AG04450 (cell line): ENCODE measurements at regions of chr12 and their contacts with region 1.

Region 1: GRCh38 chr12:49580572-49581535 is 12.9 kb upstream of the MCRS1 start:
- DNase-seq: peak; percentile 42
- H3K4me3 ChIP-seq: no peak overlapping the region
- H3K27ac ChIP-seq: no peak overlapping the region
- H3K27me3 ChIP-seq: no peaks in the 10 kb centered on the region
- CTCF ChIP-seq: peak; percentile 93

Region 2: DNA sequence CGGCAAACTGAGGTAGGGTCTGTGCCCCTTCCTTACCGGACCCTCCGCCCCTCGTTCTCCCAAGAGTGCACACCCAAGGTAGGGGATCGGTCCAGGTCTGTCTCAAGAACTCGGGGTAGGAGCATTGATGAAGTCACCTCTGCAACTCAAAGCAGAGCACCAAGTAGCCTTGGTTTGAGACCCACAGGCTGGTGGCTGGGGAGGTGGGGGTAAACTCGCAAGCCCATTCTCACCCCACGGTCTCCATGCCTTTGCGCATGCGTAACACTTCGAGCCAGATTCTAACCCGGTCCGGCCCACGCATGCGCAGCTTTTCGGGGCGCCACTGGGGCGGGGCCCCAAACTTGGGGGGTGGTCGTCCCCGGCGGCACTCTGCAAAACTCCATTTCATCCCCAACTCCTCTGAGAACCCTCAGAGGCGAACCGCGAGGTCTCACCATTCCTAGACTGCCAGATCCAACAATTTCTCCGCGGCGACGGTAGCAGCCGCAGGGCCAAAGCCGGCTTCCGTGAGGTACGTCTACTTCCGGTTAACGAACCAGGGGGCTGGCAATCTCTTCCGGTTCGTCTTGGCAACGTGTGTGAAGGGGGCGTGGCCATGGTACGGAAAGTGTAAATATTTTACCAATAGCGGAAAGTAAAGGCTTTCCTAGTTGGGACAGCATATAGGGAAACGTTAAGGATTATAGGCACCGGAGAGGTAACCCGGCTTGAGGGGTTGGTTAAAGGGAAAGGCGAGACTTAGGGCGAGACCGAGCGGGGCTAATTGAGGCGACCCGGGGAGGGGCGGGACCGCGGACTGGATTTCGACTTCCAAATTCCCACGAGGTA is 13.0 kb before region 1 on chr12 and contains the start of gene MCRS1:
- CTCF ChIA-PET with region 1: interaction called, 22 read pairs
- POLR2A ChIA-PET with region 1: interaction called, 5 read pairs
- DNase-seq: peak; percentile 75
- H3K4me3 ChIP-seq: peak within 1 kb of the TSS; percentile 100
- H3K27ac ChIP-seq: peak within 1 kb of the TSS; percentile 87
- H3K27me3 ChIP-seq: no peaks in the 10 kb centered on the region
- CTCF ChIP-seq: no peak
- polyA plus RNA-seq, gene MCRS1: 47.0 and 54.2 TPM in 2 replicates

Region 3: GRCh38 chr12:49623142-49623904 is 42.5 kb after region 1 on chr12 and contains the start of gene PRPF40B:
- CTCF ChIA-PET with region 1: interaction called, 11 read pairs
- POLR2A ChIA-PET with region 1: interaction called, 4 read pairs
- DNase-seq: peak; percentile 30
- H3K4me3 ChIP-seq: peak within 1 kb of the TSS; percentile 65
- H3K27ac ChIP-seq: peak within 1 kb of the TSS; percentile 61
- H3K27me3 ChIP-seq: no peaks in the 10 kb centered on the region
- CTCF ChIP-seq: peak; percentile 44
- polyA plus RNA-seq, gene PRPF40B: 9.0 and 10.9 TPM in 2 replicates

Region 4: GRCh38 chr12:49740930-49741881 is 160.4 kb after region 1 on chr12 and contains the start of gene TMBIM6:
- CTCF ChIA-PET with region 1: no interaction called
- POLR2A ChIA-PET with region 1: no interaction called
- DNase-seq: peak; percentile 100
- H3K4me3 ChIP-seq: peak within 1 kb of the TSS; percentile 100
- H3K27ac ChIP-seq: peak within 1 kb of the TSS; percentile 97
- H3K27me3 ChIP-seq: no peaks in the 10 kb centered on the region
- CTCF ChIP-seq: peak; percentile 96
- polyA plus RNA-seq, gene TMBIM6: 711 and 906 TPM in 2 replicates

Region 5: GRCh38 chr12:49809381-49809905 is 228.6 kb after region 1 on chr12:
- CTCF ChIA-PET with region 1: no interaction called
- POLR2A ChIA-PET with region 1: no interaction called
- DNase-seq: no peak
- H3K4me3 ChIP-seq: no peak overlapping the region
- H3K27ac ChIP-seq: peak overlapping the region; percentile 21
- H3K27me3 ChIP-seq: no peaks in the 10 kb centered on the region
- CTCF ChIP-seq: no peak

Region 6: DNA sequence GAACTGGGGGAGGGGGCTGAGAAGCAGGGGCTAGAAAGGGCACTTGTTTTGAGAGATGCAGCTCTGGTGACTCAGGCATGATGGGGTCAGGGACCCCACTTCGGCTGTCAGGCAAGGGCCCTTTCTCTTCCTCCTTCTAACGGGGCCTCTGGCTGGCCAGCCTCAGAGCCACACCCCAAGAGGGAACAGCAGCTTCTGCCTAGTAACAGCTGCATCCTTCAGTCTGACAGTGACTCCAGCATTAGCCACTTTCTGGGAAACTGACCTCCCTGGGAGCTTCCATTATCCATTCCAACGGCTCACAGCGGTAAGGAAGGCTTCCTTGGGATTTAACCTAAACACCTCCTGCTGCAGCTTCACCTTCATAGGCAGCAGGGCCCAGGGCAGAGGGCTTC is 244.5 kb after region 1 on chr12:
- CTCF ChIA-PET with region 1: no interaction called
- POLR2A ChIA-PET with region 1: no interaction called
- DNase-seq: no peak
- H3K4me3 ChIP-seq: peak overlapping the region; percentile 37
- H3K27ac ChIP-seq: peak overlapping the region; percentile 80
- H3K27me3 ChIP-seq: no peaks in the 10 kb centered on the region
- CTCF ChIP-seq: no peak